Heart right ventricle (tissue), 16 donors: ENCODE measurements at regions of chr9 and their contacts with region 1.

Region 1: GRCh38 chr9:114397848-114398605 is 10.2 kb upstream of the AKNA start:
- DNase-seq: peak; percentile 96
- ATAC-seq: peak; percentile 94 to 97 (median 96)
- H3K4me3 ChIP-seq: peak overlapping the region; percentile 48 to 91 (median 78)
- H3K27ac ChIP-seq: peak overlapping the region; percentile 36 to 90 (median 79)
- H3K4me1 ChIP-seq: peaks cover 3 to 46% (median 25%) of the 10 kb centered on the region in 9 donors
- H3K27me3 ChIP-seq: no peaks in the 10 kb centered on the region
- CTCF ChIP-seq: peak in 3 of 9 donors; percentile 17 to 36 (median 17)

Region 2: DNA sequence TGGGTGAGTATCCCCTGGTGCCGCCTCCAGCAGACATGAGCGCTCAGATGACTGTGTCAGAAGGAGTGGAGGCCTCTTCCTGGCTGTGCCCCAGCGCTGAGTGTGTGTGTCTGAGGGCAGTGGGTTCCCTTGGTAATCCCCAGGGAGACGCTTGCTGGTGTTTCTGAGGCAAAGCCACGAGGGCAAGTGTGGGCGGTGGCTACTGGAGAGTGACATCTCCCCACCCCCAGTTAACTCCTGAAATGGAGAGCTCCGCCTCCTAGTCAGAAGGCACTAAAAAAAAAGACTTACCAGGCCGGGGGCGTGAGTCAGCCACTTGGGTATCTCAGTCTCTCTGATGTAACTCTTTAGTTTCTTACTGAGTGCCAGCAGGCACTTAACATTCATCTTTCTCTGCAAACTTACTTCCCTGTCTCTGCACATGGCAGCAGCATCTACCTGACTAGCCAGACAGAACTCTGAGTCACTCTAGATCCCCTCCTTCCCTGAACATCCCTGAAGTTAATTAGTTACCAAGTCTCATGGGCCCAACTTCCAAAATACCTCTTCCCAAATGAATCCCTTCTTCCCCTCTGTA is 49.0 kb before region 1 on chr9:
- intact Hi-C with region 1: loop called in 1 of 10 experiments (anchors 5 kb)
- DNase-seq: peak; percentile 41 to 43
- ATAC-seq: peak; percentile 27 to 87 (median 70)
- H3K4me3 ChIP-seq: no peak overlapping the region
- H3K27ac ChIP-seq: peak overlapping the region in 2 of 10 donors; percentile 16 to 53
- H3K4me1 ChIP-seq: peaks cover 0 to 28% (median 8%) of the 10 kb centered on the region in 9 donors
- H3K27me3 ChIP-seq: no peaks in the 10 kb centered on the region
- CTCF ChIP-seq: no peak

Region 3: DNA sequence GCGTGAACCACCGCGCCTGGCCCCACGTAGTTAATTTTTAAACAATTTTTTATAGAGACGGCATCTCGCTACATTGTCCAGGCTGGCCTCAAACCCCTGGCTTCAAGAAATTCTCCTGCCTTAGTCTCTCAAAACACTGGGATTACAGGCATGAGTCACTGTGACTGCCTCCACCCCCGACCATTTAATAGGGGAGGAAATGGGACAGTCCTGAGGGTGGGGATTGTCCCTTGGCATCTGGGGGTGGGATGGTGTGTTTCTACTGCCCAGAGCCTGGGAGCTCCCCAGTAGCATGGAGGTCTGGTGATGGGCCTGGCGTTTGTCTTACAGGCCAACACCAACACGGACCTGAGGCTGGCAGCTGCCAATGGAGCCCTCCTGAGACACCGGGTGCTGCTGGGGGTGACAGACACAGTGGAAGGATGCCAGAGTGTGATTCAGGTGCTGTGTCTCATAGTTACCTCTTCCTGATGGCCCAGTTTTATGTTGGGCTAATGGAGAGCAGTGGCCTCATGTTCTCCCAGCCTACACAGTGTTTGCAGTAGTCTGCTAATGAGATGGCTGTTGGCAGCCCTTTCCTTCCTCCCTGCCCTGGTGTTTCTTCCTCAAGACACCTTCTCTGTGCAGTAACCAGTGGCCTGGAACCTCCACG is 235.5 kb after region 1 on chr9:
- intact Hi-C with region 1: no loop called
- DNase-seq: no peak
- ATAC-seq: no peak
- H3K4me3 ChIP-seq: no peak overlapping the region
- H3K27ac ChIP-seq: no peak overlapping the region
- H3K4me1 ChIP-seq: no peaks in the 10 kb centered on the region
- H3K27me3 ChIP-seq: no peaks in the 10 kb centered on the region
- CTCF ChIP-seq: no peak